ENCODE measurements at regions of chr1 and their contacts with region 1.

Region 1: GRCh38 chr1:17458794-17459193 is 19.3 kb upstream of the RCC2 start:
- DNase-seq: no peak
- ATAC-seq: no peak
- H3K4me3 ChIP-seq: no peak overlapping the region
- H3K27ac ChIP-seq: no peak overlapping the region
- H3K4me1 ChIP-seq: no peaks in the 10 kb centered on the region
- H3K27me3 ChIP-seq: peaks cover 0 to 15% (median 3%) of the 10 kb centered on the region in 3 donors
- CTCF ChIP-seq: no peak

Region 2: GRCh38 chr1:17377334-17377953 is 81.3 kb before region 1 on chr1:
- intact Hi-C with region 1: loop called in 1 of 2 experiments (anchors 2 kb)
- DNase-seq: no peak
- ATAC-seq: no peak
- H3K4me3 ChIP-seq: no peak overlapping the region
- H3K27ac ChIP-seq: no peak overlapping the region
- H3K4me1 ChIP-seq: no peaks in the 10 kb centered on the region
- H3K27me3 ChIP-seq: peaks cover 3 to 21% (median 9%) of the 10 kb centered on the region in 3 donors
- CTCF ChIP-seq: no peak

Region 3: GRCh38 chr1:17439250-17440073 is 19.3 kb before region 1 on chr1 and contains the start of gene RCC2:
- intact Hi-C with region 1: no loop called
- DNase-seq: peak; percentile 75 to 82
- ATAC-seq: peak; percentile 69 to 80 (median 76)
- H3K4me3 ChIP-seq: peak within 1 kb of the TSS; percentile 93
- H3K27ac ChIP-seq: peak within 1 kb of the TSS; percentile 84
- H3K4me1 ChIP-seq: peaks cover 23% of the 10 kb centered on the region
- H3K27me3 ChIP-seq: no peaks in the 10 kb centered on the region
- CTCF ChIP-seq: peak; percentile 36
- total RNA-seq, gene RCC2: 9.4 to 18.7 (median 12.1) TPM